ENCODE measurements at regions of chr1 and their contacts with region 1.

Region 1: DNA sequence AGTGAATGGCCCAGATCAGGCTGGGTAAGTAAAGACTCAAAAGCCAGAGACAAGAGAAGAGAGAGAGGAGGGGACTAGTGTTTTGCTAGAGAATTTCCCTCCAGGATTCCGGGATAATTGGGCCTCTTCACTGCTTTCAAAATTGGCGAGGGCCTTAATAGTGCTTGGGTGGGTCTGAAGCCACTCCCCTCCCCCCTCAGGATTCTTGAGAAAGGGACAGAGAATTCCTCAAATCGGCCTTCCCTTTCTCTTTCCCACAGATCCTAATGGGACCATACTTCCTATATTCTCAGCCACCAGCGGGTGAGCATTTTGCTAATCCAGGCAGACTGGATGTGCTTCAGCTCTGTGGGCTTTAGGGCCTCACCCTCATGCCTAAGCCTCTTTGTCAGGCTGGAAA is 11.9 kb downstream of the SFN start:
- DNase-seq: no peak

Region 2: GRCh38 chr1:26733982-26734381 is 140.9 kb before region 1 on chr1:
- intact Hi-C with region 1: no loop called
- DNase-seq: no peak

Region 3: GRCh38 chr1:26811057-26811456 is 63.8 kb before region 1 on chr1:
- intact Hi-C with region 1: loop called (anchors 5 kb)
- DNase-seq: no peak

Region 4: DNA sequence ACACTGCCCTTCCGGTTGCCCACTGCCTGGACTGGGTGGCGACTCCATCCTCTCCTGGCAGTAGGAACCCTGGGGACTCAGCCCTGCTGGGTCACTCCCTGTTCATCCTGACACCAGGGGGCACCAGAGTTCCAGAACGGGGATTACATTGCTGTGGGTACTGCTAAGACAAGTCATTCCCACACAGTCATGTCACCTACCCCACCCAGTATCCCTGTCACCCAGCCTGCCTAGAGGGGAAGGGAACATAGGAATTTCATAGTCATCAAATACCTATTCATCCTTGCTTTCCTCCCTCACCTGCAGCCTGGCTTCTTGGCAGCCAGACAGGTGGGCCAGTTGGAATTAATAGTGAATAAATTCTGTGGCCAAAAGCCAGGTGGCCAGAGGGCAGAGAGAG is 21.7 kb before region 1 on chr1:
- intact Hi-C with region 1: loop called (anchors 1 kb)
- DNase-seq: peak in 9 of 10 donors; percentile 50 to 96 (median 81)